CD4-positive, alpha-beta T cell (primary cell): ENCODE measurements at regions of chr16 and their contacts with region 1.

Region 1: GRCh38 chr16:30813821-30814189 is 26.8 kb upstream of the ZNF629 start:
- DNase-seq: no peak
- ATAC-seq: peak; percentile 8
- H3K4me3 ChIP-seq: peak overlapping the region; percentile 65
- H3K4me3 Mint-ChIP-seq: peak overlapping the region; percentile 85
- H3K27ac ChIP-seq: peak overlapping the region; percentile 26 to 64
- H3K27ac Mint-ChIP-seq: peak overlapping the region; percentile 81
- H3K4me1 ChIP-seq: peaks cover 17% of the 10 kb centered on the region
- H3K4me1 Mint-ChIP-seq: peaks cover 15% of the 10 kb centered on the region
- H3K27me3 ChIP-seq: no peaks in the 10 kb centered on the region
- H3K27me3 Mint-ChIP-seq: no peaks in the 10 kb centered on the region
- CTCF ChIP-seq: no peak

Region 2: DNA sequence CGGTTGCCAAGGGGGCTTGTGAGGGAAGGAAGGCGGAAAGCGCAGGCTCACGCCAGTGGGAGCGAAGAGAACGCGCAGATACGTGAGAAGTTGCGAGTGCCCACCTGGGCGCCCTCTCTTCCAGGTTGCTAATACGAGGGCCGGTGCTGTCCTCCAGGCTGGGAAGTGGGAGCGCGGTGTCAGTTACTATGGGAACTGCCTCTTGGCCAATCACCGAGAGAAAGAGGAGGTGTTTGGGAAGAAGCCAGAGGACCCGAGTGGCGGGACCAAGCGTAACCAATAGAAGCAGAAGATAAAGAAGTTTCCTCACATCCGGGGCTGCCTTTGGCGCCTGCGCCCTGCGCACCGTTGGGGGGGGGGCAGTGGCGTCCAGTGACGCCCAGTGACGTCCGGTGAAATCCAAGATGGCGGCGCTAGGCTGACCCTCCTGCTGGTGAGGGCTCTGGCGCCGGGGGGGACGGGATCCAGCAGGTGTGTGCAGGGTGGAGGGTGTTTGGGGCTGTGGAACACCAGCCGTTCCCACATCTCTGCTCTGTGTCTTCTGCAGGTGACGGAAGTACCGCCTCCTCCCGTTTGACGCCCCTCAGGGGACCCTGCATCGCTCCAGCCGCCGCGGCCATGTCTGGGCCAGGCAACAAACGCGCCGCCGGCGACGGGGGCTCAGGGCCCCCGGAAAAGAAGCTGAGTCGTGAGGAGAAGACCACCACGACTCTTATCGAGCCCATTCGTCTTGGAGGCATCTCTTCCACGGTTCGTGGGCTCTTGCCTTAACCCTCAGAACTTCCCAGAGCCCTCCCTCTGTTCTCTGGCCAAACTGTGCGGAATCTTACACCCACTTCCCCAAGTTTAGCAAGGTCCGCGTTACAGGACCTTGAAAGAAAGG is 51.6 kb before region 1 on chr16 and contains the starts of genes CFAP119 and RNF40:
- CTCF ChIA-PET with region 1: no interaction called
- POLR2A ChIA-PET with region 1: interaction called, 3 read pairs
- intact Hi-C with region 1: loop called in 1 of 2 experiments (anchors 1 kb)
- DNase-seq: peak; percentile 70 to 96 (median 85)
- ATAC-seq: peak; percentile 91
- H3K4me3 ChIP-seq: peak within 1 kb of the TSS; percentile 99
- H3K4me3 Mint-ChIP-seq: peak within 1 kb of the TSS; percentile 99
- H3K27ac ChIP-seq: peak within 1 kb of the TSS; percentile 71 to 90
- H3K27ac Mint-ChIP-seq: peak within 1 kb of the TSS; percentile 85
- H3K4me1 ChIP-seq: peaks cover 35% of the 10 kb centered on the region
- H3K4me1 Mint-ChIP-seq: peaks cover 30% of the 10 kb centered on the region
- H3K27me3 ChIP-seq: no peaks in the 10 kb centered on the region
- H3K27me3 Mint-ChIP-seq: no peaks in the 10 kb centered on the region
- CTCF ChIP-seq: no peak
- total RNA-seq, gene CFAP119: 1.7 to 2.2 TPM
- total RNA-seq, gene RNF40: 63.0 to 65.2 TPM

Region 3: DNA sequence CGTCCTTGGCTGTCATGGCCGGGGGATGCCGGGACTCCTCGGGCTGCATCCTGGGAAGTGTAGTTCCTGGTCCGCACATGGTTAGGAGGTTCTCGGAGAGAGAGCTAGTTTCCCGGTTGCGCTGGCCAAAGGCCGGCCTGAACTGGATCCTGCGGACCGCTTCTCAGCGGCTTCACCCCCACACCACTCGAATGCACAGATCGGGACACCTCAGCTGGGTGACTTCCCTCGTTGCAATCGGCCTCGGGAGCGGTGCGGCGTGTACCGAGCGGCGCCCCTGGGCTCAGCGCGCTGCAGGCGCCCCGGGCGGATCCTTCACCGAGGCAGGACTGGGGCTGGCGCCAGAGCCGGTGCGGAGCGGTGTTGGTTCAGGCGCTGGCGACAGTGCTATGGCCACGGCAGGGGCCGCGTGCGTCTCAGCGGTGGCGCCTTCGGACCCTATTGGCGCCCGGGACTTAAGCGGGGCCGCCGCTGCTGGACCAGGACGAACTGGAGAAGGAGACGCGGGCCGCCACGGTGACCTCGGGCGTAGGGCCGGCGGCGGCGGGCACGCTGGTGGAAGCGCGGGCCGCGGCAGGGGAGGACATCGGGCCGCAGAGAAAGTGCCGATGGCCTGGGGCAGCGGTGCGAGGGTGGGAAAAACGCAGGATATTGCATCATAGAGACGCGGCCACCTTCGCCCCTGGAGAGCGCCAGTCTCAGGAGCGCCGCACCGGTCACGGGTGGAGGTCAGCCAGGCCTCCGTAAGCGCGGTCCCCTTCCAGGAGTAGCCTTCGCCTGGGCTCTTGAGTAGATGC is 38.2 kb before region 1 on chr16:
- CTCF ChIA-PET with region 1: interaction called, 5 read pairs
- POLR2A ChIA-PET with region 1: interaction called, 4 read pairs
- intact Hi-C with region 1: loop called in 1 of 2 experiments (anchors 5 kb)
- DNase-seq: peak; percentile 19 to 73 (median 49)
- ATAC-seq: peak; percentile 83
- H3K4me3 ChIP-seq: peak overlapping the region; percentile 55
- H3K4me3 Mint-ChIP-seq: peak overlapping the region; percentile 92
- H3K27ac ChIP-seq: no peak overlapping the region
- H3K27ac Mint-ChIP-seq: no peak overlapping the region
- H3K4me1 ChIP-seq: peaks cover 20% of the 10 kb centered on the region
- H3K4me1 Mint-ChIP-seq: peaks cover 34% of the 10 kb centered on the region
- H3K27me3 ChIP-seq: no peaks in the 10 kb centered on the region
- H3K27me3 Mint-ChIP-seq: peaks cover 8% of the 10 kb centered on the region
- CTCF ChIP-seq: no peak

Region 4: GRCh38 chr16:30902029-30902972 is 88.5 kb after region 1 on chr16:
- CTCF ChIA-PET with region 1: interaction called, 8 read pairs
- POLR2A ChIA-PET with region 1: interaction called, 10 read pairs
- intact Hi-C with region 1: no loop called
- DNase-seq: peak in 12 of 14 experiments; percentile 25 to 83 (median 52)
- ATAC-seq: peak; percentile 85
- H3K4me3 ChIP-seq: peak overlapping the region; percentile 58
- H3K4me3 Mint-ChIP-seq: peak overlapping the region; percentile 97
- H3K27ac ChIP-seq: peak overlapping the region; percentile 67 to 81
- H3K27ac Mint-ChIP-seq: peak overlapping the region; percentile 87
- H3K4me1 ChIP-seq: peaks cover 44% of the 10 kb centered on the region
- H3K4me1 Mint-ChIP-seq: peaks cover 32% of the 10 kb centered on the region
- H3K27me3 ChIP-seq: no peaks in the 10 kb centered on the region
- H3K27me3 Mint-ChIP-seq: no peaks in the 10 kb centered on the region
- CTCF ChIP-seq: no peak